ENCODE measurements at regions of chr13 and their contacts with region 1.

Region 1: DNA sequence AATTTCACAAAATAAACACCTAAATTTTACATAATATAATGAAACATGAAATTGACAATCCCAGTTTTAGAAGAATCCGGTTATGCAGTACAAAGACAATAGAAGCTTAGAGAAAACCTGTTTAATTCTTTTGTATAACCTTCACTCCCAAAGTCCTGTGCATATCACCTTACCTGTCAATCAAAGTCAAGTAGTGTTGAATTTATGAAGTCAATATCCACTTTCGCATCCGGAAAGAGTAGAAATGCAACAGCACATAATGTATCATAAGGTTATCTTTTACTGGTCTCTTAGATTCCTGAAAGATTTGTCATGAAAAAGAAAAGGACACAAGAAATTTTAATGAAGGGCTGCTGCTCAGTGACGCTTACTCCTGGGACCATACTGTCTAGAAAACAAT is 1112.6 kb downstream of the PCDH9 start:
- DNase-seq: no peak

Region 2: DNA sequence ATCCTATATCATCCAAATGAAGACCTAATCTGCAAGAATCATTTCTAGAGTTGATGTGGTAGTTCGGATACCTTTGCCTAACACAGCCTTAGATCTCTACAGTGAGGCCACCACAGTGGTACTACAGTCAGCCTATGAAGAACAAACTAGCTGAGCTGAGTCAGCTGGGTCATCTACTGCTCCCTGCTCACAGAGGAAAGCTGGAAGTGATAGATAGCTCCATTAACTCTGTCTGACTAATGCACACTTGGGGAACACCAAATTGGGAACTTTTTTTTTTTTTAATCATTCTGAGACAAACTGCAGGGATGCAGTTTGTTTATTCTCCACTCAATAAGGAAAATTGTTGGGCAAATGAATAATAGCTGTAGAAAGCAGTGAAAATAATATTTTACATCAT is 48.0 kb before region 1 on chr13:
- intact Hi-C with region 1: loop called in 1 of 2 experiments (anchors 2 kb)
- DNase-seq: no peak

Measured in posterior vena cava (tissue), 2 donors.